HEK293 (cell line): ENCODE measurements at regions of chr2 and their contacts with region 1.

Region 1: GRCh38 chr2:106566050-106566449 is 78.9 kb downstream of the CD8B2 start:
- H3K4me3 ChIP-seq: no peak overlapping the region
- H3K27ac ChIP-seq: no peak overlapping the region
- H3K4me1 ChIP-seq: no peaks in the 10 kb centered on the region
- CTCF ChIP-seq: no peak

Region 2: DNA sequence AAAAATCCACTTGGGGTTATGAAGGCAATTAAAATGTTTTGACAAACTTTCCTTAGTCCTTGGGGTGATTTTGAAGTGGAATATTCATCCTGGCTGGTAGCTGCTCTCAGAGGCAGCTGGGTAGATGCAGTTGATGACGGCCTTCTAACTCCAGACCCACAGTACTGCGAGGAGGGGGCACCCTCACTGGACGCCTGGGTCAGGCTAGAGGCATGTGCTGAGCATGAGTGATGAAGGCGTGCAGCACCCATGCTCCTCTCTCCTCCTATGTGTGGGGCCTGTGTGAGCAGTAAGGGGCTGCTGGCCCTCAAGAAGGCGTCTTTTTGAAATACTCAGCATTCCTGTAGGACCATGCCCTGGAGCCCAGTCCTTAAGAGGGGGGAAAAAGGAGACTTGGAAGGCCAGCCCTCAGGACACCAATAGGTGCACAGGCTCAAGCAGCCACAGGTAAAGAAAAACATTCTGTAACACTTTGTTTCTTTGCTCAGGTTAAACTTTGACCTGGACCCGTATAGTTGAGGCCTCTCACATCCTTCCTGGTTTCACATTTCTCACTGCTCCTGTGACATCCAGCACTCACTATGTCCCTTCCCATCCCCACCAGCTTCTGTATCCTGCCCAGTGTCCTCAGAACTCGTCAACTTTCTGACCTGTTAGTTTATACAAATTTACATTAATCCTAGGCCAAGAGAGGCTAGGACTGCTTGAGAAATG is 14.5 kb before region 1 on chr2:
- CTCF ChIA-PET with region 1: interaction called, 12 read pairs
- POLR2A ChIA-PET with region 1: no interaction called
- H3K4me3 ChIP-seq: no peak overlapping the region
- H3K27ac ChIP-seq: no peak overlapping the region
- H3K4me1 ChIP-seq: no peaks in the 10 kb centered on the region
- CTCF ChIP-seq: no peak

Region 3: DNA sequence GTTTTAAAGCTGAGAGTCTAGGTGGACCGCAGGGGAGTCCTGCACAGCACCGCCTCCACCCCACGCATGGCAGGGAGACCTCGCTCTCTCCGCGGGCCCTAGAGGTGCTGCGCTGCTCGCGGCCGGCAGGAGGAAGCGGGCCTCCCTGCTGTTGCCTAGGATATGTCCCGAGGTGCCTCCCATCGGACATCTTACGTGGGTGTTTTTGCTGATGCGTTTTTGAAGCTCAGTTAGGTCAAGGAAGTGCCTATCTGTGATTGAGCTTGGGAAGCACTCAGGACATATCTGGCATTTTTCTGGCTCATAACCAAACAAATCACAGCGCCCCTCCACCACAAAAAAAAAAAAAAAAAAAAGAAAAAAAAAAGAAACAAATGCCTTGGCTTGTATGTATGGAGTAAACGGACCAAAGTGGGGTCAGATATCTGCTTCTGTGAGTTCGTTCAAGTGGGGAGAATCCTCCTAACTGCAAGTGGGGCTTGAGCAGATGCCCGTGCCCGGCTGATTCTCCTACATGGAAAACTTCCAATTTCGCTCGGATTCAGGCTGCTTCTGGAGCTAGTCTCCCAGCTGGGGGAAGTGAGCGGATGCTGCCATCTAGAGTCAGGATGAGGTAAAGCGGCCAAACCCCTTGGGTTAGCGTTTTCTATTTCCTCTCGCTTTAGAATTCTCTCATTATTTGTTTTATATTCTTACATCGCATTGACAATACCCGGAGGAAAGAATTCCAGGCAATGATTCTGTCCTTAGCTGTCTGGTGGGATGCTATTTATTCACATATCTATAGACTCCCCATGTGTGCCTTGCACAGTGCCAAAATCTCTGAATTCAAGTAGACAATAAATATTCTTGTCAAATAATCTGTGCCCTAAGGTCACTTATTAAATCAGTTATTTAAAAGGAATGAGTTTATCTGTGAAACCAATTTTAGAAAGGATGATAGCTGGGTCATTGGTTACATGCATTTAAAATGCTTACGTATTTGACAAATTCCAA is 16.4 kb after region 1 on chr2:
- CTCF ChIA-PET with region 1: interaction called, 91 read pairs
- POLR2A ChIA-PET with region 1: no interaction called
- H3K4me3 ChIP-seq: peak overlapping the region; percentile 30
- H3K27ac ChIP-seq: no peak overlapping the region
- H3K4me1 ChIP-seq: no peaks in the 10 kb centered on the region
- CTCF ChIP-seq: peak; percentile 65

Region 4: DNA sequence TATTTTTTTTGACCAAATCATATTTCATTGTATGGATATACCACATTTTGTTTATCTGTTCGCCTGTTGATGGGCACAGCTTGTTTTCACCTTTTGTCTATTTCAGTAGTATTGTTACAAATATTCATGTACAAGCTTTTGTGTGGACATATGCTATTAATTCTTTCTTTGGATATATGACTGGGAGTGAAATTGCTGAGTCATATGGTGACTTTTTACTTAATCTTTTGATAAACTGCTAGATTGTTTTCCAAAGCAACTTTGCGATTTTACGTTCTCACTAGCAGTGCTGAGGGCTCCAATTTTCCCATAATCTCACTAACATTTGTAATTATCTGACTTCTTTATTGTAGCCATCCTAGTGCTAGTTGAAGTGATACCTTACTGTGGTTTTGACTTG is 33.5 kb after region 1 on chr2:
- CTCF ChIA-PET with region 1: no interaction called
- POLR2A ChIA-PET with region 1: no interaction called
- H3K4me3 ChIP-seq: no peak overlapping the region
- H3K27ac ChIP-seq: no peak overlapping the region
- H3K4me1 ChIP-seq: no peaks in the 10 kb centered on the region
- CTCF ChIP-seq: no peak

Region 5: DNA sequence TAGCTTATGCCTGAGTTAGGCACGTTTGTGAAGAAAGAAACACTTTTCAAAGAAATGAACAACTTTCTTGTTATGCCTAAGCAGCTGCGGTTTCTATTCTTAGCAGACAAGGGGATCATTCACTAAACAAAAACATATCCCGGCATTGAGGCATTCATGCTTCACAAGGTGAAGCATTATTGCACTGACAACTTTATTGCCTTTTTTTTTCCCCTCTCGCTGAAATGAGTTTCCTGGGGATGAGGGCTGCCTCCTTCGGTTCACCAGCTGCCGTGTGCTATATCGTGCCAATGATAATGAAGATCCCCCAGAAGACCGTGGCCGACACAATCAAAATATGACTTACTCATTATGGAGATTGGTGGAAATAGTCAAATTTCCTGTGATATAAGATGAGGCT is 608.1 kb after region 1 on chr2:
- CTCF ChIA-PET with region 1: no interaction called
- POLR2A ChIA-PET with region 1: no interaction called
- H3K4me3 ChIP-seq: no peak overlapping the region
- H3K27ac ChIP-seq: no peak overlapping the region
- H3K4me1 ChIP-seq: no peaks in the 10 kb centered on the region
- CTCF ChIP-seq: no peak